A549 (cell line): ENCODE measurements at regions of chr2 and their contacts with region 1.

Region 1: GRCh38 chr2:33475224-33476130 is 972 bp upstream of the RASGRP3 start:
- DNase-seq: peak; percentile 78 to 87
- ATAC-seq: peak; percentile 87 to 90
- H3K4me3 ChIP-seq: peak overlapping the region; percentile 57
- H3K27ac ChIP-seq: peak overlapping the region; percentile 51 to 76
- H3K4me1 ChIP-seq: peaks cover 5% of the 10 kb centered on the region; the same call in 2 of the 3 replicates
- CTCF ChIP-seq: peak; percentile 80
- EP300 ChIP-seq: no peak
- POLR2A ChIP-seq: no peak
- RAD21 ChIP-seq: peak; percentile 67 to 71

Region 2: GRCh38 chr2:33205693-33206434 is 269.6 kb before region 1 on chr2:
- CTCF ChIA-PET with region 1: no interaction called
- POLR2A ChIA-PET with region 1: no interaction called
- DNase-seq: no peak
- ATAC-seq: no peak
- H3K4me3 ChIP-seq: no peak overlapping the region
- H3K27ac ChIP-seq: no peak overlapping the region
- H3K4me1 ChIP-seq: peaks cover 16% of the 10 kb centered on the region
- CTCF ChIP-seq: no peak
- EP300 ChIP-seq: no peak
- POLR2A ChIP-seq: no peak
- RAD21 ChIP-seq: no peak

Region 3: DNA sequence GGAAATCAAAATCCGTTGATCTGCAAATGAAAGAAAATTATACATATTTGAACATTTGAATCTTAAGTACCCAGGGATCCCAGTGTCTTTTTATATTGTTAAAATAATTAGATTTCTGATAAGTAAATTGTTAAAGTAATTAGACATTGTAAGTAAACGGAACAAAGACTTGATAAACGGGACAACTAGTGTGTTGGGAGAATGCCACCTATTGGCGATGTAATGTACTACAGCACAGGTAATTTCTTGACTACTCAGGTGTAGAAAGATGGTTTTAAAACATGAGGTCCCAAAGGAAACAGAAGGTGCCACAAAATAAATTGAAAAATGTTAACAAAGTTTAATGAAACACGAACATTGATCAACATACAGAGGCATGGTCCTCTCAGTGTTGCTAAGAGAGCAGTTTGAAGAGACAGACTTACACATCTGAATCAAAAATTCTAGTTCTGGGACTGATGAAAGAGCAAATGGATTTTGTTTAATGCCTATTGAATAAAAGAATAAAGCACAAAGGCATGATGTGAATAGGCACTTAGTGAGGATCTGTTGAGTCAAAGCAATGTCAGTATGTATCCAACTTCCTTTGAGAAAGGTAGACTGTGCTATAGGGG is 102.4 kb before region 1 on chr2:
- CTCF ChIA-PET with region 1: no interaction called
- POLR2A ChIA-PET with region 1: no interaction called
- DNase-seq: peak; percentile 61 to 77
- ATAC-seq: peak in 1 of 2 experiments; percentile 75; a peak in 3 of 6 replicates
- H3K4me3 ChIP-seq: no peak overlapping the region
- H3K27ac ChIP-seq: peak overlapping the region in 1 of 2 experiments; percentile 28; a peak in 2 of 6 replicates
- H3K4me1 ChIP-seq: peaks cover 7% of the 10 kb centered on the region; the same call in 2 of the 3 replicates
- CTCF ChIP-seq: peak; percentile 96
- EP300 ChIP-seq: no peak
- POLR2A ChIP-seq: no peak
- RAD21 ChIP-seq: peak; percentile 94

Region 4: DNA sequence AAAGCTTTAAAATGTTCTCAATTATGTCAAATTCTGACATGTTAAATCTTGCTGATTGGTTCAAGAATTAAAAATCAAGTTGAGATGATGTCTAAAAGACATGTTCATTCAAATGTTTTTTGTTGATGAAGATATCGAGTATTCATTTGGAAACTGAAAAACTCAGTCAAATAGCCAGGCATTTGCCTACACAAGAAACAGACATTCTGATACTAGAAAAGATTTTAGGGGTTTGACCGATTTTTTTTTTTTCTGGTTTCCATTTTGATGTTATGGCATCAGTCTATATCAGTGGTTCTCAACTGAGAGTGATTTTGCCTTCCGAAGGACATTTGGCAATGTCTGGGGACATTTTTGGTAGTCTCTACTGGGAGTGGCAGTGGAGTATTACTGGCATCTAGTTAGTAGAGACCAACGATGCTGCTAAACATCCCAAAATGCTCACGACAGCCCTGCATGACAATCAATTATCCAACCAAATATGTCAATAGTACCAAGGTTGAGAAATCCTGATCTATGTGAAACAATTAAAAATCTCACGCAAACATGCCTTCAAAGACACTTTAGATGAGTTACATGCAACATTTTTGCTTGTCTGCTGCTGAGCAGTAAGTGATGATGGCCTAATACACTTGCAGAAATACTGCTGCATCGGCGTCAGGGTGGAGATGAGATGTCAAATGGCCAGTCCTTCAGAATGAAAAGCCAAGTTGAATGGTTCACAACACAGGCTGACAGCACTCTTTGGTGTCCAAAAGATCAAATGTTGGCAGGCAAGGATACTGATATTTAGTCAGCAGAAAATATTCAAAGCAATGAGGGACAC is 13.5 kb after region 1 on chr2:
- CTCF ChIA-PET with region 1: interaction called, 13 read pairs
- POLR2A ChIA-PET with region 1: no interaction called
- DNase-seq: no peak
- ATAC-seq: no peak
- H3K4me3 ChIP-seq: no peak overlapping the region
- H3K27ac ChIP-seq: no peak overlapping the region
- H3K4me1 ChIP-seq: peaks cover under 1% of the 10 kb centered on the region; the same call in 2 of the 3 replicates
- CTCF ChIP-seq: no peak
- EP300 ChIP-seq: no peak
- POLR2A ChIP-seq: no peak
- RAD21 ChIP-seq: no peak

Region 5: DNA sequence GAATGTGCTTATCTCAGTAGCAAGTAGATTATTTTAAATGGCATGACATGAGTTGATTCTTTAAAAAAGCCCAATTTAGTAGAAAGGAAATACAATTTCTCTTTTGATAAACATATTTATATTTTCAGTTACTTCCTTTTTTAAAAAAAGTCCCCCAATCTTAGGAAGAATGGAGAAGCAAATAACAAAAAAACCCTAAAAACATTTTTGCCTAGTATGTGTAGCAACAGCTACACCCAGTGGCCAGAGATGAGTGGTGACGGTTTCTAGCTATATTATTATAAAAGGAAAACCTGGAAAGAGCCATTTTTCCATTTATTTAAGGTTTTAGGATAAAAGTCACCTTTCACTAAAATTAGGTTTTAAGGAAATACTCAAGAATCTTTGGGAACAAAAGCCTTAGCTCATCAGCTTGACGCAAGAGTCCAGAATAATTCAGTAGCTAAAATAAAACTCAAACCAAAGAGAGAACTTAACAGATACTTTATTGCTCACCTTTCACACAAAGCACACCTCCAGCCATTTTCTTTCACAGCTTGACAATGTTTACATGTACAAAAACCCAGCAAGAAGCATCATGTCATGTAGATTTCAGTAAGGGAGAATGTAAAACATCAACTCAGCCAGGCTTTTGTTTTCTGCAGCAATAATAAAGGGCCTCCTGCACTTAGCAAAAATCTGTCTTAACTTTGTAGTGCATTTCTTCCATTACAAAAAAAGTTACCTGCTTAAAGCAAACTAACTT is 107.9 kb after region 1 on chr2:
- CTCF ChIA-PET with region 1: interaction called, 17 read pairs
- POLR2A ChIA-PET with region 1: no interaction called
- DNase-seq: peak in 1 of 2 experiments; percentile 46
- ATAC-seq: peak in 1 of 2 experiments; percentile 62; a peak in 3 of 6 replicates
- H3K4me3 ChIP-seq: no peak overlapping the region
- H3K27ac ChIP-seq: no peak overlapping the region
- H3K4me1 ChIP-seq: no peaks in the 10 kb centered on the region
- CTCF ChIP-seq: peak; percentile 99
- EP300 ChIP-seq: no peak
- POLR2A ChIP-seq: no peak
- RAD21 ChIP-seq: peak; percentile 93 to 96

Region 6: DNA sequence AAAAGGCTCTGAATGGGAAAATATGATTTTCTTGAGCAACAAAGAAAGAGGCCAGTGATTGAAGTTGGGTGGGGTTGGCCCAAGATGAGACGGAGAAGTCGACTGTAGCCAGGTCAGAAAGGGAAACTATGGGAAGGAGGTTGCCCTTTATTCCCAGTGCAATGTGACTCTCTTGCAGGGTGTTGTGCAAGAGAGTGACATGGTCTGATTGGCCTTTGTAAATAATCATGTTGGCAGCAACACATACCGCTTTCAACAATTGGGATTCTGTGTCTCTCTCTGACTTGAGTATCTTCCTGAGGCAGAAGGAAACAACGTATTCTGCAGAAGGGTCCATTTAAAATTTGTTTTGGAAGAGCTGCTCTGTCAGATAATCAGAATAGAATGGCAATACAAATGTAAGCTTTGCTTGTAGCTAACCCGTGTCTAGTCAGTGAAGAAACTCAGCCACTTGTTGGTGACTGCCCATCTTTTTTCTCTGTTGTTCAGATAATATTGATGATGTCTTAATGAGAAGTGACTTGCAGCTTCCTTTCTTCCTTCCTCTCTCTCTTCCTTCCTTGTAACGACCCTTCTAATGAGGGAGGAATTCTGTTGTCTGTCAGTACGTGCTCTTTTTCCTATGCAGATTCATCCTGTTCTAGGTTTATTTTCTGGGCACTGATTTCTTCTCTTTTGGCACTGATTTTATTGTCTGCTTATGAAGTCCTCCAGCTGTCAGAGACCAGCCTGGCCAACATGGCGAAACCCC is 434.6 kb after region 1 on chr2:
- CTCF ChIA-PET with region 1: no interaction called
- POLR2A ChIA-PET with region 1: no interaction called
- DNase-seq: peak in 1 of 2 experiments; percentile 2
- ATAC-seq: no peak
- H3K4me3 ChIP-seq: no peak overlapping the region
- H3K27ac ChIP-seq: no peak overlapping the region
- H3K4me1 ChIP-seq: no peaks in the 10 kb centered on the region
- CTCF ChIP-seq: no peak
- EP300 ChIP-seq: no peak
- POLR2A ChIP-seq: no peak
- RAD21 ChIP-seq: no peak